Natural killer cell (primary cell): ENCODE measurements at regions of chr7 and their contacts with region 1.

Region 1: GRCh38 chr7:43700059-43700501 is 29.2 kb downstream of the COA1 start:
- DNase-seq: peak in 1 of 2 donors; percentile 80
- ATAC-seq: peak; percentile 70 to 94 (median 84)
- H3K4me3 ChIP-seq: no peak overlapping the region
- H3K4me3 Mint-ChIP-seq: peak overlapping the region; percentile 32
- H3K27ac ChIP-seq: no peak overlapping the region
- H3K27ac Mint-ChIP-seq: peak overlapping the region; percentile 54 to 63
- H3K4me1 ChIP-seq: no peaks in the 10 kb centered on the region
- H3K4me1 Mint-ChIP-seq: peaks cover 29 to 31% of the 10 kb centered on the region in 2 donors
- H3K27me3 ChIP-seq: no peaks in the 10 kb centered on the region
- H3K27me3 Mint-ChIP-seq: no peaks in the 10 kb centered on the region
- CTCF ChIP-seq: peak; percentile 79

Region 2: DNA sequence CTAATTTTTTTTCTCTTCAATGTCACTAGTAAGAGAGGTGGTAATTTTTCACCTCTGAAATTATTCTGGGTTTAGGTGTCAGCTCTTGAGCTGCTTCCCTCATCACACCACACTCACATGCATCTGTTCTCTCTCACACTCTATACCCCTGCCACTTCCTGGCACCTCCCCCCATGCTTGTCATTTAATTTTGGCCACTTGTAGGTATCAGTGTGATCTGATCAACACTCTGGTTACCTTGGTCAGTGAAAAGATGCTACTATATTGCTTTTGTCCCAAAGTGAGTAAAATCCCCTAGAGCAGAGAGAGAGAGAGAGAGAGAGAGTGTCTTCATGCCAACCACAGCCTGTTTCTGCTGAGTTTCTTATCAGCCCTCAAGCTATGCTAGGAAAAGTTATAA is 74.6 kb before region 1 on chr7:
- intact Hi-C with region 1: loop called (anchors 5 kb)
- DNase-seq: peak; percentile 76 to 86
- ATAC-seq: peak; percentile 82 to 97 (median 93)
- H3K4me3 ChIP-seq: no peak overlapping the region
- H3K4me3 Mint-ChIP-seq: peak overlapping the region; percentile 86
- H3K27ac ChIP-seq: peak overlapping the region; percentile 80
- H3K27ac Mint-ChIP-seq: no peak overlapping the region
- H3K4me1 ChIP-seq: peaks cover 37% of the 10 kb centered on the region
- H3K4me1 Mint-ChIP-seq: peaks cover 79 to 80% of the 10 kb centered on the region in 2 donors
- H3K27me3 ChIP-seq: no peaks in the 10 kb centered on the region
- H3K27me3 Mint-ChIP-seq: no peaks in the 10 kb centered on the region
- CTCF ChIP-seq: no peak

Region 3: GRCh38 chr7:43906331-43907010 is 206.4 kb after region 1 on chr7 and contains the start of gene URGCP:
- intact Hi-C with region 1: no loop called
- DNase-seq: peak; percentile 44 to 75
- ATAC-seq: peak; percentile 87 to 96 (median 94)
- H3K4me3 ChIP-seq: peak within 1 kb of the TSS; percentile 46
- H3K4me3 Mint-ChIP-seq: peak within 1 kb of the TSS; percentile 95
- H3K27ac ChIP-seq: no peak within 1 kb of the TSS
- H3K27ac Mint-ChIP-seq: peak within 1 kb of the TSS; percentile 81 to 82
- H3K4me1 ChIP-seq: peaks cover 13% of the 10 kb centered on the region
- H3K4me1 Mint-ChIP-seq: peaks cover 18 to 36% of the 10 kb centered on the region in 2 donors
- H3K27me3 ChIP-seq: no peaks in the 10 kb centered on the region
- H3K27me3 Mint-ChIP-seq: no peaks in the 10 kb centered on the region
- CTCF ChIP-seq: no peak
- total RNA-seq, gene URGCP: 11.5 to 24.4 (median 21.5) TPM

Region 4: DNA sequence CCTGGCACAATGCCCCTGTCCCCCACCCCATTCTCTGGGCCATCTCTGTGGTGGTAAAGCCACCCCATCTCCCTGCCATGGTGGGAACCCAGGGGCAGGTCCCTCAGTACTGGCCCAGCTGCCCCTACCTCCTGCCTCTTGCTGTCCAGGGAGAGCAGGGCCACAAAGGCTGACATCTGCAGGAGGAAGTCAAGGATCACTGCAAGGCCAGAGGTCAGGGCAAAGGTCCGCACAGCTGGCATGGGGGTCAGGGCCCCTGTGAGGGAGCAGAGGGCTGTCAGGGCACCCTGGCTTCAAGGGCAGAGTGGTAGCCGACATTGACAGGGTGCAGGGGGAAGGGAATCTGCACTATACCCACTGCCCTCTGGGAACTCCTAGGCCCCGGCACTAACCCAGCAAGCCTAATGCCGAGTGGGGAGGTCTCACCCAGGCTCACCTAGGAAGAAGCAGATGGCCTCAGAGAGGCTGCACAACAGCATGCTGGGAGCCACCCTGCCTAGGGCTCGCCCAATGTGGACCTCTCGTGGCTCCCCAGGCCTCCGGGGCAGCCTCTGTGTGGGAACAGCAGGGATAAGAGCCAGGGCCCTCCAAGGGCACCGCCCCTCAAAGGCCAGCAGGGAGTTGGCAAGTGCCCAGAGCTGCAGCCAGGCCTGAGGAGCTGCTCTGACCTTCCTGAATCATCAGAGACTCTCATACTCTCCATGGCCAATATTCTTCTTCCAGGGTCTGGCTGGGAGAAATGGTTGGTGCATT is 833.4 kb after region 1 on chr7:
- intact Hi-C with region 1: no loop called
- DNase-seq: no peak
- ATAC-seq: no peak
- H3K4me3 ChIP-seq: no peak overlapping the region
- H3K4me3 Mint-ChIP-seq: no peak overlapping the region
- H3K27ac ChIP-seq: no peak overlapping the region
- H3K27ac Mint-ChIP-seq: no peak overlapping the region
- H3K4me1 ChIP-seq: no peaks in the 10 kb centered on the region
- H3K4me1 Mint-ChIP-seq: no peaks in the 10 kb centered on the region
- H3K27me3 ChIP-seq: no peaks in the 10 kb centered on the region
- H3K27me3 Mint-ChIP-seq: no peaks in the 10 kb centered on the region
- CTCF ChIP-seq: no peak